ENCODE measurements at regions of chr7 and their contacts with region 1.

Region 1: GRCh38 chr7:15326044-15326644 is 235.7 kb downstream of the AGMO start:
- DNase-seq: peak; percentile 24
- H3K4me3 Mint-ChIP-seq: no peak overlapping the region
- H3K27ac Mint-ChIP-seq: no peak overlapping the region
- H3K4me1 Mint-ChIP-seq: no peaks in the 10 kb centered on the region
- H3K27me3 Mint-ChIP-seq: peaks cover 60% of the 10 kb centered on the region
- CTCF ChIP-seq: peak; percentile 39

Region 2: DNA sequence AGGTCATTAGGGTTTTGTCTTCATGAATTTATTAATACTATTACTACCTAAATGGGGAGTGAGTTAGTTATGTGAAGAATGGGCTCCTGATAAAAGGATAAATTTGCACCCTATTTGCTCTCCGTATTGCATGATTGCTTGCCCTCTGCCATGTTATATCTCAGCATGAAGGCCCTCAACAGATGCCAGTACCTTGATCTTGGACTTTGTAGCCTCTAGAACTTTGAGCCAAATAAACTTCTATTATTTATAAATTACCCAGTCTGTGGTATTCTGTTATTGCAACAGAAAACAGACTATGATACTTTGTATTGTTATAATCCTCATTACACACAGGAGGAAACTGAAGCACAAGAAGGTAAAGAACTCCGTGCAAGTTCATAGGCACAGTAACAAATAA is 84.9 kb after region 1 on chr7:
- CTCF ChIA-PET with region 1: no interaction called
- POLR2A ChIA-PET with region 1: no interaction called
- intact Hi-C with region 1: no loop called
- DNase-seq: no peak
- H3K4me3 Mint-ChIP-seq: no peak overlapping the region
- H3K27ac Mint-ChIP-seq: no peak overlapping the region
- H3K4me1 Mint-ChIP-seq: no peaks in the 10 kb centered on the region
- H3K27me3 Mint-ChIP-seq: peaks cover 8% of the 10 kb centered on the region
- CTCF ChIP-seq: no peak

Region 3: DNA sequence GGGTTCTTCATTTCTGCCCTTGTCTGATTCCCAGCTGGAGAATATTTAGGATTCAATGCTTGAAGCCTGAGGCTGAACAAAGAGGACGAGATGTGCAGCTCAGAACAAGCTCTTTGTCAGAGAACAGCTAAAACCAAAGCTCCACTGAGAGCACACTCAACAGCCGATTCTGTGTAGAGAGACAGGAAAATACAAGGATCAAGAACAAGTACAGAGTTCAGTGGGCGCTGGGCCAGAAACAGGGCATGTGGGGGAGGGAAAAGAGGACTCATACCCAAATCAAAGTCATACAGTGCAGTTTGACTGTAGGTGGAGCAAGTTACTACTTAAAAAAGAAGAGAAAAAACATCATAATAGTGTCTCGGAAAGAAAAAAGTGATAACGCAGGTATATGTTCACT is 235.7 kb after region 1 on chr7 and contains the start of gene AGMO:
- CTCF ChIA-PET with region 1: no interaction called
- POLR2A ChIA-PET with region 1: no interaction called
- intact Hi-C with region 1: loop called (anchors 10 kb)
- DNase-seq: no peak
- H3K4me3 Mint-ChIP-seq: no peak within 1 kb of the TSS
- H3K27ac Mint-ChIP-seq: no peak within 1 kb of the TSS
- H3K4me1 Mint-ChIP-seq: no peaks in the 10 kb centered on the region
- H3K27me3 Mint-ChIP-seq: peaks cover 81% of the 10 kb centered on the region
- CTCF ChIP-seq: no peak
- total RNA-seq, gene AGMO: not detected in 2 replicates

Region 4: GRCh38 chr7:16071246-16071857 is 745.2 kb after region 1 on chr7:
- CTCF ChIA-PET with region 1: interaction called, 10 read pairs
- POLR2A ChIA-PET with region 1: no interaction called
- intact Hi-C with region 1: loop called (anchors 1 kb)
- DNase-seq: peak; percentile 61
- H3K4me3 Mint-ChIP-seq: no peak overlapping the region
- H3K27ac Mint-ChIP-seq: no peak overlapping the region
- H3K4me1 Mint-ChIP-seq: peaks cover 4% of the 10 kb centered on the region
- H3K27me3 Mint-ChIP-seq: peaks cover 42% of the 10 kb centered on the region
- CTCF ChIP-seq: peak; percentile 71